Left cardiac atrium (tissue), 4 donors: ENCODE measurements at regions of chr1 and their contacts with region 1.

Region 1: DNA sequence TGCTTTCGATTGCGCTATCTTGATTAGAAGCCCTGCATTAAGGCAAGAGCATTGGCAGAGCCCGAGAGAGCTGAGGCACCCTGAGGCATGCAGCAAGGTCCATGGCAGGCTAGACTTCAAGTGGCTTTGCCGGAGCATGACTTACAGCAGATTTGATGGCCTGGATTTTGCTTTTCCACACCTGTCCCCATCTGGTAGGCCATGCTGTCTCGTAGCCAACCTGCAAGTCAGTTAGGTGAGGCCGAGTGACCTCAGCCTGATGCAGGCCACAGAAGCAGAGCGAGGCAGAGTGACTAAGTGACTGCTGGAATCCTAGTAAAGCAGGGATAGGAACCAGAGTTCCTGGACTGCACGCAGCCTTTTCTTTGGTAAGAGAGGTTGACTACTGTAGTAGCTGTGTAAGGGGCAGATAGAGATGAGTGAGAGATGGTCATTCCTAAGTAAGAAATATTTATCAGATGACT is 148.9 kb downstream of the PBX1 start:
- DNase-seq: peak; percentile 49
- ATAC-seq: peak in 1 of 2 donors; percentile 62

Region 2: GRCh38 chr1:164384262-164384661 is 323.6 kb before region 1 on chr1:
- intact Hi-C with region 1: no loop called
- DNase-seq: no peak
- ATAC-seq: no peak

Region 3: DNA sequence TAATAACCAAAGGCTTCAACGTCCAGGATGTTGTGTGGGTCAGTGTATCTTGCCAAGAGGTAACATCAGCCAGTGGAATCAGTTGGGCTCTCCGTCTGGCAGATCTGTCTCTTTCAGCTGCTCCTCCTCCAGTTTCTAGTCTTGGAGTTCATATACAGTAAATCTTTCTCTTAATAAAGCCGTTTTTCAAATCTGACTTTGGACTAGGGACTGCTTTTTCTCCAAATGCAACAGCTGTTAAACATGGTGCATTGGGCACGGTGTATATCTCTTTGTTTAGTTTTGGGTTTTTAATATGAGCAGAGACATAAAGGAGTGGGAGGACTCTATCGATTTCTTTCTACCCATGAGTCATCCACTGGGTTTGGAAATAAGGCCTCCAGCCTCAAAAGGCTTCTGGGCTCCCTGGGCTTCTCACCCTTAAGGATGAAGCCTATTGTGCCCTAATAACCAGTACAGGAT is 63.1 kb before region 1 on chr1:
- intact Hi-C with region 1: loop called in 1 of 2 experiments (anchors 5 kb)
- DNase-seq: no peak
- ATAC-seq: peak in 1 of 2 donors; percentile 61

Region 4: GRCh38 chr1:164689672-164690598 is 18.0 kb before region 1 on chr1:
- intact Hi-C with region 1: no loop called
- DNase-seq: no peak
- ATAC-seq: no peak

Region 5: GRCh38 chr1:164780863-164781262 is 73.0 kb after region 1 on chr1:
- intact Hi-C with region 1: loop called in 1 of 2 experiments (anchors 5 kb)
- DNase-seq: peak; percentile 50
- ATAC-seq: peak; percentile 31 to 84